Calu3 (cell line): ENCODE measurements at regions of chr10 and their contacts with region 1.

Region 1: DNA sequence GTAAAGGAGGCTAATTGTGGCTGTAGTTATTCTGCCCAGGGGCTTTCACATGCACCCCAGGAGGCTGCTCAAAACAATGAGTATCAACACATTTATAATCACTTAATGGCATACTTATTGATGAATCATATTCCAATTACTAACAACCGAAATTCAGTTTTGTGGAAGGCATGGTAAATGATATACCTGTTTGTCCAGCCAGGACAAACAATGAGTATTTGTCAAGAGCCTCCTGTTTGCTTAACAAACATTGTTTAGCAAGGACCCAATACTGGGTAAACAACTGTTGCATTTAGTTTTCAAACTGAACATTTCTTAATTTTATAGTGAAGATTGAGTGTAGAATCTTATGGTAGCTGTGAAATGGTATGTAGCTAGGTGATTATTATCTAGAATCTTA is 473.7 kb downstream of the ATRNL1 start:
- DNase-seq: peak; percentile 2
- H3K4me3 Mint-ChIP-seq: no peak overlapping the region
- H3K27ac Mint-ChIP-seq: no peak overlapping the region
- H3K4me1 Mint-ChIP-seq: no peaks in the 10 kb centered on the region
- H3K27me3 Mint-ChIP-seq: no peaks in the 10 kb centered on the region
- CTCF ChIP-seq: no peak

Region 2: DNA sequence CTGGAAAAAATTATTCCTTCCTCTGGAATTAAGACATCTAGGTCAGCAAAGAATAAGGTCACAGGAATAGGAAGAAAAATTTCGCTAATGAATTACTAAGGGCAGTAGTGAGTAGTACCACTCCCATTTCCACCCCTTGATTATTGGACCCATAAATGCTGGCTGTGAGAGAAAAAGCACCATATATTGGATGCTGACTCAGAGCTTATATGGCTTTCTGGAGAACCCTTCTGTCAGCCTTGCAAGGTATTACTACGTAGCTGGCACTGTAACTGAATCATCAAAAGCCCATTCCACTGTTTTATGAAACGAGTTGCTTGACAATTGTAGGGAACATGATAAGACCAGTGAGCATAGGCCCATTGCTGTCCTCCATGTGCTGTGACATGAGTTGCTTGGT is 294.3 kb before region 1 on chr10:
- CTCF ChIA-PET with region 1: no interaction called
- intact Hi-C with region 1: loop called (anchors 10 kb)
- DNase-seq: no peak
- H3K4me3 Mint-ChIP-seq: no peak overlapping the region
- H3K27ac Mint-ChIP-seq: no peak overlapping the region
- H3K4me1 Mint-ChIP-seq: no peaks in the 10 kb centered on the region
- H3K27me3 Mint-ChIP-seq: no peaks in the 10 kb centered on the region
- CTCF ChIP-seq: no peak